Naive thymus-derived CD4-positive, alpha-beta T cell (primary cell): ENCODE measurements at regions of chr1 and their contacts with region 1.

Region 1: DNA sequence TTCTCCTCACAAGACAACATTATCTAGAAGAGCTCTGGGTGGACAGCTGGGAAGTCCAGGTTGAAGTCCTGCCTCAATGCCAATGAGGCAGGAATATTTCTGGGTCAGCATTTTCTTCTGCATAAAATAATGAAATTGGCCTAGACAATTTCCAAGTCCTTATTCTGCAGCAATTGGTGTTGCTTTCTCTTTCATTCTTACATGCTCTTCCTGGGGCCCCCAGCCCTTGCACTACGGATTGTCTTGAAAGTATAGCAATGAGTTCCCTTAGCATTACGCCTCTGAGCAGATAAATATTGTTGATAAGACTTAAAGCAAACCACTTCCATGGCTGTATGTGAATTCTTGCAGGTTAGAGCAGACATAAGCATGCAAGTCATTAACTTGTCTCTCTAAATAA is 188.5 kb downstream of the TGFBR3 start:
- DNase-seq: peak in 8 of 9 donors; percentile 52 to 73 (median 60)
- ATAC-seq: peak; percentile 88
- H3K4me3 ChIP-seq: peak overlapping the region; percentile 45
- H3K4me3 Mint-ChIP-seq: peak overlapping the region; percentile 25 to 88 (median 57)
- H3K27ac ChIP-seq: peak overlapping the region; percentile 35
- H3K27ac Mint-ChIP-seq: peak overlapping the region; percentile 39 to 90 (median 83)
- H3K4me1 ChIP-seq: peaks cover 14 to 18% of the 10 kb centered on the region in 2 donors
- H3K4me1 Mint-ChIP-seq: peaks cover 19 to 43% (median 37%) of the 10 kb centered on the region in 7 donors
- H3K27me3 ChIP-seq: no peaks in the 10 kb centered on the region
- H3K27me3 Mint-ChIP-seq: no peaks in the 10 kb centered on the region

Region 2: GRCh38 chr1:91684481-91685196 is 12.8 kb before region 1 on chr1:
- CTCF ChIA-PET with region 1: no interaction called
- POLR2A ChIA-PET with region 1: no interaction called
- intact Hi-C with region 1: loop called in 1 of 2 experiments (anchors 1 kb)
- DNase-seq: peak in 6 of 9 donors; percentile 5 to 44 (median 22)
- ATAC-seq: peak; percentile 70
- H3K4me3 ChIP-seq: no peak overlapping the region
- H3K4me3 Mint-ChIP-seq: peak overlapping the region in 8 of 10 donors; percentile 39 to 64 (median 54)
- H3K27ac ChIP-seq: no peak overlapping the region
- H3K27ac Mint-ChIP-seq: peak overlapping the region; percentile 16 to 90 (median 81)
- H3K4me1 ChIP-seq: peaks cover 12 to 20% of the 10 kb centered on the region in 2 donors
- H3K4me1 Mint-ChIP-seq: peaks cover 13 to 52% (median 24%) of the 10 kb centered on the region in 7 donors
- H3K27me3 ChIP-seq: no peaks in the 10 kb centered on the region
- H3K27me3 Mint-ChIP-seq: no peaks in the 10 kb centered on the region

Region 3: GRCh38 chr1:91712981-91713841 is 15.8 kb after region 1 on chr1:
- CTCF ChIA-PET with region 1: no interaction called
- POLR2A ChIA-PET with region 1: no interaction called
- intact Hi-C with region 1: loop called in 1 of 2 experiments (anchors 1 kb)
- DNase-seq: peak in 1 of 9 donors; percentile 60
- ATAC-seq: peak; percentile 86
- H3K4me3 ChIP-seq: no peak overlapping the region
- H3K4me3 Mint-ChIP-seq: peak overlapping the region in 3 of 10 donors; percentile 37 to 57 (median 48)
- H3K27ac ChIP-seq: no peak overlapping the region
- H3K27ac Mint-ChIP-seq: peak overlapping the region in 3 of 9 donors; percentile 24 to 71 (median 66)
- H3K4me1 ChIP-seq: peaks cover 0 to 16% of the 10 kb centered on the region in 2 donors
- H3K4me1 Mint-ChIP-seq: peaks cover 0 to 48% (median 11%) of the 10 kb centered on the region in 7 donors
- H3K27me3 ChIP-seq: no peaks in the 10 kb centered on the region
- H3K27me3 Mint-ChIP-seq: no peaks in the 10 kb centered on the region